Posterior vena cava (tissue), 2 donors: ENCODE measurements at regions of chrX and their contacts with region 1.

Region 1: GRCh38 chrX:136028251-136028984 is 43.2 kb downstream of the SLC9A6 start:
- DNase-seq: no peak

Region 2: DNA sequence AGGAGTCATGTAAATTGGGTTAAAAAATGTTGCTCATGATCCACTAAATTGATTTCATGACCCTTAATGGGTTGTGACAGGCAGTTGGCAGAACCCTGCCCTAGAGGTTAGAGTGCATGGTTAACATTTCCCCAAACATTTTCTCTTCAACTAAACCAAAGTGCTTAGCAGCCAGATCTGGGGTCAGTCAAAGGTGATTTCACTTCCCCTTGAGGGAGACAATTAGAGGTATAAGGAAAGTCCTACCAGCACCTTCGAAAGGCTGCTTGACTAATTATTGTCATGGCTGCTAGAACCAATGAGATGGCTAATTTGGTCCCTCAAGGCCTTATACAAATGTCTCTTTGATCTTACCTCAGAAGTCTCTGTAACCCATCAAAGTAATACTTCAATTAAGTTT is 538.9 kb before region 1 on chrX:
- intact Hi-C with region 1: no loop called
- DNase-seq: no peak

Region 3: GRCh38 chrX:136065044-136065671 is 36.7 kb after region 1 on chrX:
- intact Hi-C with region 1: no loop called
- DNase-seq: no peak

Region 4: GRCh38 chrX:136147315-136147901 is 119.0 kb after region 1 on chrX and contains the start of gene FHL1:
- intact Hi-C with region 1: loop called in 1 of 2 experiments (anchors 5 kb)
- DNase-seq: peak; percentile 87
- total RNA-seq, gene FHL1: 1,036 to 1,050 TPM

Region 5: GRCh38 chrX:136162831-136163570 is 134.6 kb after region 1 on chrX:
- intact Hi-C with region 1: loop called in 1 of 2 experiments (anchors 10 kb)
- DNase-seq: peak; percentile 89

Region 6: DNA sequence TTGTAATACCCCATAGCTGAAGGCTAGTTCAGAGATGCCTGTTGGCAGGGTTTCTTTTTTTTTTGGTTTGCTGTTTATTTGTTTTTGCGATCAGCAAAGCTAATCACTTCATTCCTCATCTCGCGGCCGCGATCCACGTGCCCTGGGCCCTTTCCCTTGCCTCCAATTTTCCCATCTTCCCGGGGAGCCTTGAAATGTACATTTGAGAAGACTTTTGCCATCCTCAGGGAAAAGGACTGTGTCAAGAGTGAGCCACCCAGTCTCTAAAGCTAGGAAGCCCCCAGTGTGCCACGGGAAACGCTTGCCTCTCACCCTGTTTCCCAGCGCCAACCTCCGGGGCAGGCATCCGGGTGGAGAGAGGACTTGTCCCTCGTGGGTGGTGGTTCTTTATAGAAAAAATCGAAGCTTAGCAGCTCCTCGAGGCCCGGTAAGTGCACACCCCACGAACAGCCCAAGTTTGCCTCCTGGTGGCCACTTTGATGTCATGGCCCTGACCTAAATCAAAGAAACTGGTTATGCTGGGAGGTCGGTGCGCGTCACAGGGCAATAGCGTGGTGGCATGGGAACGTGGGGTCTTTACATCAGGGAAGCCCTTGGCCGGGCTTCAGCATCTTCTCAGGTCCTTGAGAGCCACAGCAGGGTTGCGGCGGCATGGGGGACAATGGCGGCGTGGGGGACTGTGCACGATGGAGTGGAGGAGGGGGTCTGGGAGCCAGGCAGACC is 180.8 kb after region 1 on chrX:
- intact Hi-C with region 1: loop called in 1 of 2 experiments (anchors 5 kb)
- DNase-seq: no peak

Region 7: DNA sequence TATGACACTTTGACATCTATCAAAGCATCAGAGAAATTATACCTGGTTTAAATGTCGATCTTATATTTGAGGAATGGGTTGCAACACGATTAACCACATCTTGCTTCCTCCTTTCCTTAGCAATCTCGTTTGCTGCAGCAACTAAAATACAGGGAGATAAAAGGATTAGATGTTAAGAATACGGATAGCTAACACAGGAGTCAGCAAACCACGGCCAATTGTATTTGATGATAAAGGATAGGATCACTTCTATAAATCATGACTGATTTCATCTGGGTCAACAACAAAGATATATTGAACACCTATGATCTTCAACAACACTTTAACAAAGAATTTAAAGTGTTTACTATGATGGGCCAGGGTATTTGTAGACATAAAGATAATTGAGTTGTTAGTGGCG is 217.8 kb after region 1 on chrX:
- intact Hi-C with region 1: loop called in 1 of 2 experiments (anchors 10 kb)
- DNase-seq: no peak